ENCODE measurements at regions of chr3 and their contacts with region 1.

Region 1: DNA sequence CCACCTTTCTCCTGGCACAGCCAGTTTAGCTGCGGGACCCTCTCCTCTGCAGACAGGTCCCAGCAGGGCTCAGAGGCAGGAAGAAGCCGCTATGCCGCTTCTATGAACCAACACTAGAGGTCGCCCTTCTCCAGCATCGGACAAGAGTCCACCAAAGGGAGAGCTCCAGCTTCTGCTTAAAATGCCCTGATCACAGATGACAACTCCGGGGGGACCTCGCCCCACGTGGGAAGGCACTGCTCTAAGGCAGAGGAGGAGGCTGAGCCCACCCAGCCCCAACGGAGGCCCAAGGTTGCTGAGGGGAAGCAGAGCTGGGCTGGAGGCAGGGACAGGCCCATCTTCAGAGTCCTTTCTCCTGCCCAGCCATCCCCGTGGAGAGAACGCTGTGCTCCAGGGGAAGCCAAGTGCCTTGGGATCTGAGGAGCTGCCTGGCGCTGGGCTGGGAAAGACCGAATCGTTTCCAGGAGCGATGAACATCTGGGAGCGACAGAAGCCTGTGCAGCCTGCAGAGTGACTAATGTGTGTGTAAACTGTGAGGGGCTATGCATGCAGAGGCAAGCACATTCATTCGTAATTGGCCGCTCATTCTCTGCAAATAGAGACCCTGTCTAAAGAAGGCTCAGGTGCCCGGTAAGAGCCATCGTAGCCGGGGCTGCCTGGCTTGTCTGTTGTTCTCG is 43.5 kb upstream of the BDH1 start:
- DNase-seq: peak; percentile 89
- H3K4me3 ChIP-seq: peak overlapping the region; percentile 33 to 45
- H3K27ac ChIP-seq: no peak overlapping the region
- H3K4me1 ChIP-seq: peaks cover 0 to 7% of the 10 kb centered on the region in 2 experiments; a peak in 1 of 4 replicates
- H3K27me3 ChIP-seq: no peaks in the 10 kb centered on the region
- CTCF ChIP-seq: peak; percentile 94
- EP300 ChIP-seq: no peak
- RAD21 ChIP-seq: peak; percentile 91

Region 2: DNA sequence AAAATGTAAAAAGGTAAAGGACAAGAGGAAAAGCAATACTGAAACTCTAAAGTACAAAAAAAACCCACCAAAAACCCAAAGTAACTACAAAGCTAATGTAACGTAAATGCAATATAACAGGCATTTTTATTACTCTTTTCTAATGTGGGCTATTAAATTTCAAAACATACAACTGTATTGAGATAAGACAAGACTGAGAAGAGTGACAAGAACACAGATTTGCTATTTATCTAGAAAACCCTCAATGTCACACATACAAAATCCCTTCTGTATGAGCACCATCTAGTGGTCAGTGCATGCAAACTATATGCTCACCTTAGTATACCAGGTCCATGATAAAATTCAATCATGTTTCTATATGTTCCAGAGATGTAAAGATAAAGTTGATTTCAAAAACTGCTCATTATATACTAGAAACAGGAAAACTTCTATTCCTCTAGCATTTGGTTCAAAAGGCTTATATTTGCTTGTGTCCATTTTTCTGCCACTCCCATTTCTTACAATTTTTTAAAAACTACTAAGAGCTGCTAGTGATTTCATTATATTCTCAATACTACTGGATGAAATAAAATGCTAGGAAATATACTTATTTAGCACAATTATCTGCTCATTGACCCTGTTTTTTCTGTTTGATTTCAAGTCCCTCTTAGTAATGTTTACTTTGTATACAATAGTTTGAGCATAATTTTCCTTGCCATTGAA is 412.2 kb before region 1 on chr3:
- CTCF ChIA-PET with region 1: no interaction called
- POLR2A ChIA-PET with region 1: no interaction called
- DNase-seq: peak; percentile 55
- H3K4me3 ChIP-seq: no peak overlapping the region; a peak in 1 of 4 replicates
- H3K27ac ChIP-seq: peak overlapping the region in 1 of 2 experiments; percentile 80; a peak in 2 of 4 replicates
- H3K4me1 ChIP-seq: peaks cover 16 to 22% of the 10 kb centered on the region in 2 experiments; a peak in 3 of 4 replicates
- H3K27me3 ChIP-seq: no peaks in the 10 kb centered on the region
- CTCF ChIP-seq: peak; percentile 95
- EP300 ChIP-seq: no peak
- RAD21 ChIP-seq: peak; percentile 94

Region 3: GRCh38 chr3:197445896-197446711 is 153.1 kb before region 1 on chr3:
- CTCF ChIA-PET with region 1: no interaction called
- POLR2A ChIA-PET with region 1: no interaction called
- DNase-seq: no peak
- H3K4me3 ChIP-seq: no peak overlapping the region
- H3K27ac ChIP-seq: no peak overlapping the region
- H3K4me1 ChIP-seq: no peaks in the 10 kb centered on the region
- H3K27me3 ChIP-seq: no peaks in the 10 kb centered on the region; the same call in 1 of the 2 replicates
- CTCF ChIP-seq: no peak
- EP300 ChIP-seq: no peak
- RAD21 ChIP-seq: no peak

Region 4: GRCh38 chr3:197573048-197573767 is 26.0 kb before region 1 on chr3:
- CTCF ChIA-PET with region 1: interaction called, 13 read pairs
- POLR2A ChIA-PET with region 1: no interaction called
- DNase-seq: no peak
- H3K4me3 ChIP-seq: no peak overlapping the region
- H3K27ac ChIP-seq: no peak overlapping the region
- H3K4me1 ChIP-seq: no peaks in the 10 kb centered on the region; a peak in 1 of 4 replicates
- H3K27me3 ChIP-seq: no peaks in the 10 kb centered on the region; the same call in 1 of the 2 replicates
- CTCF ChIP-seq: no peak
- EP300 ChIP-seq: no peak
- RAD21 ChIP-seq: no peak

Region 5: DNA sequence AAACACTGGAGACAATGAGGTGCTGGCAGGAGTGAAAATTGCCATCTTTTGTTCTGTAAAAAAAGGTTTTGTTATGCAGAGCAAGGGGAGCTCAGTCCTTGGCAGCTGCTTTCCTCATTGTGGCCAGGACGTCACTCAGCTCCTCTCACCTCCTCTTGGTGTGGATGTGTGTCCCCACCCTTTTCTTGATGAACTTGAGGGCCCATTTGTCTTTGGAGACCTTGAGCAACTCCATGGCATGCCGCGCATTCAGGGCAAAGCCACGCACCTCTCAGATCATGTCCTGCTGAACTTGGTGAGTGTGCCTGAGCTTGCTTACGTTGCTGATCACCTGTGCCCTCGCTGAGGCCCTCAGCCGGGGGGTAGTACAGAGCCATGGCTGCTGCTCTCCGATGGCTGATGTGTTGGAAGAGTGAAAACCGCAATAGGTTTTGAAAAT is 19.0 kb before region 1 on chr3:
- CTCF ChIA-PET with region 1: interaction called, 24 read pairs
- POLR2A ChIA-PET with region 1: no interaction called
- DNase-seq: no peak
- H3K4me3 ChIP-seq: no peak overlapping the region
- H3K27ac ChIP-seq: no peak overlapping the region
- H3K4me1 ChIP-seq: no peaks in the 10 kb centered on the region
- H3K27me3 ChIP-seq: no peaks in the 10 kb centered on the region; the same call in 1 of the 2 replicates
- CTCF ChIP-seq: no peak
- EP300 ChIP-seq: no peak
- RAD21 ChIP-seq: no peak

Region 6: DNA sequence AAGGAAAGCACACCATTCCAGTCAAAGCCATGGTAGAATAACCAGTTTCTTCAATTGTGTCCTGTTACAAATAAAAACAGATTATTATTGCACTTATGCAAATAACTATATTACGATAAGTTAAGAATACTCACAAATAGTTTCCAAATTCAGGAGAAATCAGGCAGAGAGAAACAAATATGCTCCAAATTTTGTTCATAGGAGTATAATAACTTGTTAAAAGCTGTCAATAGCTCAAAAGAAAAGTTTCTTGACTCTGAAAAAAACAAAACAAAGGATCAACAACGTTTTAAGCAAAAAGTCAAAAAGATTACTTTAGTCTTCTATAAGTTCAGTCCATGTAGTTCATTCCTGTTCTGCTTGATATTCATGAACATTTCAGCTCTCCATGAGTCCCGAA is 16.2 kb after region 1 on chr3:
- CTCF ChIA-PET with region 1: interaction called, 61 read pairs
- POLR2A ChIA-PET with region 1: no interaction called
- DNase-seq: no peak
- H3K4me3 ChIP-seq: no peak overlapping the region
- H3K27ac ChIP-seq: no peak overlapping the region
- H3K4me1 ChIP-seq: no peaks in the 10 kb centered on the region
- H3K27me3 ChIP-seq: no peaks in the 10 kb centered on the region
- CTCF ChIP-seq: no peak
- EP300 ChIP-seq: no peak
- RAD21 ChIP-seq: no peak

Region 7: DNA sequence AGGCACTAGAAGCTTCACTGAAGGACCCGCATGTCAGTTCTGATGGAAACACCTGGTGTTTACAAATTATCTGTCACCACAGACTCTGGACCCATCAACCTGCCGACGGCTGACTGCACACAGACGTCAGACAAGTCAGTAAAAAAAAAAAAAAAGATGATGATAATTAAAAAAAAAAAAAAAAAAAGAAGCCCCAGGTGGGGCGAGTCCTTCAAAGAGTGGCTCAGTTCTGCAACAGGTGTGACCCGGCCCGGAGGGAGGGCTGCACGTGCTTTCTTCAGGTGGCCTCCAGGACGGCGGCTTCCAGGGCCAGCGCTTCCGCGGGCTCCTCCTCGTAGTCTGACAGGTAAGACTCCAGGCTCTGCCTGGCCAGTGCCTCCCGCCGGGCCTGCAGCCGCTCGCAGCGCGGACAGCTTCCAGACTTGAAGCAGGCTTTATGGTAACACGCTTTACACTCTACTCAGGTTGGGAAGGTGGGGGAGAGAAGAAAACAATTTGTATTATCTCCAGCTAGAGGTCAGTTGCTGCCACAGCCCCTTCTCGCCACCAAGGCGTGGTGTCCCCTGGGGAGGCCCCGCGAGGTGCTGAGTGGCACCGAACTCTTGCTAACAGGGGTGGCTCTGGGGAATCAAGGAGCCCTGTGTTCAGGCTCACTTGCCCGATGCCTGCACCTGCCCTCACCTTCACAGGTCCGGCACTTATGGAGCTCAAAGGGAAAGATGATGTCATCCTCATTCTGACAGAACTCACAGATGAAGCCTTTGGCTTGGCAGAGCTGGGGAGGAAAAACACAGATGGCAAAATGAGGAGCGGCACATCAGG is 75.7 kb after region 1 on chr3:
- CTCF ChIA-PET with region 1: interaction called, 29 read pairs
- POLR2A ChIA-PET with region 1: no interaction called
- DNase-seq: no peak
- H3K4me3 ChIP-seq: no peak overlapping the region
- H3K27ac ChIP-seq: no peak overlapping the region
- H3K4me1 ChIP-seq: no peaks in the 10 kb centered on the region; a peak in 1 of 4 replicates
- H3K27me3 ChIP-seq: no peaks in the 10 kb centered on the region
- CTCF ChIP-seq: no peak
- EP300 ChIP-seq: no peak
- RAD21 ChIP-seq: no peak

Region 8: DNA sequence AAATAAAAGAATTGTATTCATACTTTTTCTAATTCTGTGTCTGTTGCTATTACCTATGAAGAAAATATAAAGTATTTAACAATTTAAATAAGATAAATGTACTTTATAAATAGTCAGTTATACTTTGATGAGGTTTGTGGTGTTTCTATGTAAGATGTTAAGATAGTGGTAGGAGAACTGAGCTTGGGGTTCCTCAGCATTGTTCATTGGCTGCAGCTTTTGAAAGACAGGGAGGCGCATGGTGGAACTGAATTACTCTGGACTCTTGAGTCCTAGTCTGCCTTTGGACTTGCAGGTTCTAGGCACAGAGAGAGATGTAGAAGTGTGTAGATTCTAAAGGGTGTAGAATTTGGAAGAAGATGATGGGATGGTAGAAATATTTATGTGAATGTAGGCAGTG is 383.8 kb after region 1 on chr3:
- CTCF ChIA-PET with region 1: no interaction called
- POLR2A ChIA-PET with region 1: no interaction called
- DNase-seq: no peak
- H3K4me3 ChIP-seq: no peak overlapping the region
- H3K27ac ChIP-seq: no peak overlapping the region
- H3K4me1 ChIP-seq: no peaks in the 10 kb centered on the region
- H3K27me3 ChIP-seq: no peaks in the 10 kb centered on the region
- CTCF ChIP-seq: no peak
- EP300 ChIP-seq: no peak
- RAD21 ChIP-seq: no peak

Measured in SK-N-SH (cell line).